T-cell (primary cell): ENCODE measurements at regions of chr6 and their contacts with region 1.

Region 1: GRCh38 chr6:20991910-20992309 is 457.7 kb downstream of the CDKAL1 start:
- DNase-seq: no peak
- ATAC-seq: no peak
- H3K4me3 ChIP-seq: no peak overlapping the region
- H3K4me3 Mint-ChIP-seq: no peak overlapping the region
- H3K27ac ChIP-seq: no peak overlapping the region
- H3K27ac Mint-ChIP-seq: no peak overlapping the region
- H3K4me1 ChIP-seq: no peaks in the 10 kb centered on the region
- H3K4me1 Mint-ChIP-seq: no peaks in the 10 kb centered on the region
- H3K27me3 ChIP-seq: no peaks in the 10 kb centered on the region
- H3K27me3 Mint-ChIP-seq: no peaks in the 10 kb centered on the region

Region 2: GRCh38 chr6:21045135-21045700 is 53.3 kb after region 1 on chr6:
- CTCF ChIA-PET with region 1: interaction called in 1 of 2 experiments, 11 read pairs
- POLR2A ChIA-PET with region 1: no interaction called
- DNase-seq: no peak
- ATAC-seq: no peak
- H3K4me3 ChIP-seq: no peak overlapping the region
- H3K4me3 Mint-ChIP-seq: no peak overlapping the region
- H3K27ac ChIP-seq: no peak overlapping the region
- H3K27ac Mint-ChIP-seq: no peak overlapping the region
- H3K4me1 ChIP-seq: no peaks in the 10 kb centered on the region
- H3K4me1 Mint-ChIP-seq: peaks cover 0 to 8% (median 2%) of the 10 kb centered on the region in 3 donors
- H3K27me3 ChIP-seq: no peaks in the 10 kb centered on the region
- H3K27me3 Mint-ChIP-seq: no peaks in the 10 kb centered on the region